ENCODE measurements at regions of chr9 and their contacts with region 1.

Region 1: GRCh38 chr9:122125158-122125508 is 32.0 kb upstream of the TTLL11 start:
- DNase-seq: peak; percentile 77
- H3K4me3 ChIP-seq: no peak overlapping the region
- H3K27ac ChIP-seq: no peak overlapping the region
- H3K4me1 ChIP-seq: peaks cover 20% of the 10 kb centered on the region
- H3K27me3 ChIP-seq: no peaks in the 10 kb centered on the region
- CTCF ChIP-seq: peak; percentile 85 to 95
- POLR2A ChIP-seq: no peak

Region 2: DNA sequence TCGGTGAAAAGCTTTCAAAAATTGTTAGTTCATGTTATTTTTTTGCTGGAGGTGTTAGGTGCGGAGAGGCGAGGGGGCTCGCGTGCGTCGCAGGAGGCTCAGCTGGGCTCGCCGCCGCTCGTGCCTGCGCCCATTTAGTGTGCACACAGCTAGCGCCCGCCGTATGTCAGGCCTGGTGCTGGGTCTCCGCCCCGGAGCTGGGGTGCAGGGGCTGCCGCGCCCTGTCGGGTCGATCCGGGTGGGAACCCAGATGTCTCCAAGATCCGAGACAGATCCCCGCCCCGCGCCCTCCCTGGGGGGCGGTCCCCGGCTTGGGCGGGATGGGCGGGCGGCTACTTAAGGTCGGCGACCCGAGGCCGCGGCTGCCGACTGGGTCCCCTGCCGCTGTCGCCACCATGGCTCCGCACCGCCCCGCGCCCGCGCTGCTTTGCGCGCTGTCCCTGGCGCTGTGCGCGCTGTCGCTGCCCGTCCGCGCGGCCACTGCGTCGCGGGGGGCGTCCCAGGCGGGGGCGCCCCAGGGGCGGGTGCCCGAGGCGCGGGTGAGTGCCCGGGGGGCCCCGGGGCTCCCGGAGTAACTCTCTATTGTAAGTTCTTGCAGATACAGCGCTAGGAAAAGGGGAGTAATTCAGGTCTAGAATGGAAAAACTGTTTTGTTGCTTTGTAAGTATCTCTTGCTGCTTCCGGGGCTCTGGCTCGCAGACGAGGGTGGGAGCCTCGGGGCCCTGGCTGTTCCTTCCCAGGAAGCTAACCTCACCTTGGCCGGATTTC is 825.5 kb before region 1 on chr9:
- CTCF ChIA-PET with region 1: no interaction called
- POLR2A ChIA-PET with region 1: no interaction called
- dilution Hi-C with region 1: no loop called
- intact Hi-C with region 1: no loop called
- DNase-seq: peak; percentile 41
- H3K4me3 ChIP-seq: peak overlapping the region; percentile 41 to 52 (median 44)
- H3K27ac ChIP-seq: no peak overlapping the region
- H3K4me1 ChIP-seq: peaks cover 15% of the 10 kb centered on the region
- H3K27me3 ChIP-seq: no peaks in the 10 kb centered on the region
- CTCF ChIP-seq: no peak
- POLR2A ChIP-seq: peak; percentile 31

Region 3: GRCh38 chr9:121992571-121993212 is 132.4 kb before region 1 on chr9:
- CTCF ChIA-PET with region 1: no interaction called
- POLR2A ChIA-PET with region 1: no interaction called
- dilution Hi-C with region 1: no loop called
- intact Hi-C with region 1: no loop called
- DNase-seq: peak; percentile 74
- H3K4me3 ChIP-seq: no peak overlapping the region
- H3K27ac ChIP-seq: no peak overlapping the region
- H3K4me1 ChIP-seq: peaks cover 5% of the 10 kb centered on the region
- H3K27me3 ChIP-seq: no peaks in the 10 kb centered on the region
- CTCF ChIP-seq: peak; percentile 58 to 68
- POLR2A ChIP-seq: no peak

Region 4: DNA sequence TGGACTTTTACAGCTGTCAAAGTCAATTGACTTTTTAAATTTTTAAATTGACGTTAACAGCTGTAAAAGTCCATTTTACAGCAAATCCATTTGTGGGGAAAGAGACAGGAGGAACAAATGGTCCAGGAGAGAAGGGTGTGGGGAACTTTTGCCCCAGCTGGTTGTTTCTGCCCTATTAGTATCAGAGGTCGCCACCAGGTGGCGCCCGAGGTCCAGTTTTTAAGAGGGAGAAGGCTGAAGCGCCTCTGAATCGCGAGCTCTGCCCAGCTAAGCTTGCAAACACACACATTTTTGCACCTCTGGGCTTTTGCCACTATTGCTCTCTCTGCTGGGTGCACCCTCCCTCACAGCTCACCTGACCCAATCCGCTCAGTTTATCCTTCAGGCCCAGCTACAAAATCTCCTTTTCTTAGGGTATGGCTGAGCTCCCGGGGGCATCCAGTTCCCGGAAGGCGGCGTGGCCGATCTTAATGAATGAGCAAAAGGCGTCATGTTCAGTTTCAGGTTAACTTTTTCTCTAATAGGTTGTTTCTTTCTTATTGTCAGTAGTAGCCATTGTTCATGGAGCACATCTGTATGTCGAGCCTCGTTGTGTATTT is 25.8 kb before region 1 on chr9:
- CTCF ChIA-PET with region 1: interaction called, 331 read pairs
- POLR2A ChIA-PET with region 1: no interaction called
- dilution Hi-C with region 1: no loop called
- intact Hi-C with region 1: loop called (anchors 1 kb)
- DNase-seq: peak; percentile 60
- H3K4me3 ChIP-seq: no peak overlapping the region
- H3K27ac ChIP-seq: no peak overlapping the region
- H3K4me1 ChIP-seq: no peaks in the 10 kb centered on the region
- H3K27me3 ChIP-seq: peaks cover 0 to 2% of the 10 kb centered on the region in 2 experiments
- CTCF ChIP-seq: peak; percentile 77 to 85
- POLR2A ChIP-seq: no peak

Region 5: GRCh38 chr9:122190609-122191381 is 65.7 kb after region 1 on chr9:
- CTCF ChIA-PET with region 1: interaction called, 10 read pairs
- POLR2A ChIA-PET with region 1: no interaction called
- dilution Hi-C with region 1: no loop called
- intact Hi-C with region 1: no loop called
- DNase-seq: no peak
- H3K4me3 ChIP-seq: no peak overlapping the region
- H3K27ac ChIP-seq: no peak overlapping the region
- H3K4me1 ChIP-seq: no peaks in the 10 kb centered on the region
- H3K27me3 ChIP-seq: no peaks in the 10 kb centered on the region
- CTCF ChIP-seq: no peak
- POLR2A ChIP-seq: no peak

Region 6: DNA sequence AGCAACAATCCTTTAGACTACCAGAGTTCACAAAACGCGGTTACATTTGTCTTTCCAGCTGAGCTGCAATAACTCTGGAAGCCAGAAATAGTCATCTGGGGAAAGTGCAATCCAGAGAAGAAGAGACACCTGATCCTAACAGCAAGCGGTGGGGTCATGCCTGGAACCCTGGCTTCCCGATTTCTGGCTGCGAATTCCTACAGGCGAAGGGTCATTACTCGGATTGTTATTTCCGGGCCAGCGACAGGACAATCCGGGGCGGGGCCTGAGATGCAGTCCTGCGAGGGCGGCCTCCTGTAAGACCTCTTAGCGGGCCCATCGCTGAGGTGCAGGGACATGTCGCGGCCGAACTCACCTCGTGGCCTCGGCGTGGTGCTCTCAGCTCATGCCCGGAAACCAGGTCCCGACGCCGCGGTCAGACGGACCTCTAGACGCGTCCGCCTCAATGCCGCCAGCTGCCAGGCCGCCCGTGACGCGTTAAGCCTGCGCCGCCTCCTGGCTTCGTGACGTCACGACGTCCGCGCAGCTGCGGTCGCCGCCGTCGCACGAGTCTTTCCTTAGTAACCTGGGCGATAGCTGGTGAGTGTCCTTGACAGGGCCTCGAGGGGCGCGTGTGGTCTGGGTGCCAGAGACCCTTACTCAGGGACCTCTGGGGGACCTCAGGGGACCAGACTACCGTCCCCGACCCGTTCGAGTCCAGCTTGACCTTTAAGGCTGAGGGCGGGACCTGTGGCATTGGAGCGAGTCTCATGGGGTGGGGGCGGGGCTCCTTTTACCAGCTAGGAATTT is 139.4 kb after region 1 on chr9 and contains the starts of genes MRRF and RBM18:
- CTCF ChIA-PET with region 1: interaction called, 15 read pairs
- POLR2A ChIA-PET with region 1: no interaction called
- dilution Hi-C with region 1: no loop called
- intact Hi-C with region 1: loop called (anchors 1 kb)
- DNase-seq: peak; percentile 95
- H3K4me3 ChIP-seq: peak within 1 kb of the TSS; percentile 53 to 88 (median 76)
- H3K27ac ChIP-seq: peak within 1 kb of the TSS; percentile 68
- H3K4me1 ChIP-seq: peaks cover 26% of the 10 kb centered on the region
- H3K27me3 ChIP-seq: no peaks in the 10 kb centered on the region
- CTCF ChIP-seq: no peak
- POLR2A ChIP-seq: peak; percentile 85
- total RNA-seq, gene MRRF: 36.4 and 36.5 TPM in 2 replicates
- total RNA-seq, gene RBM18: 26.9 and 28.6 TPM in 2 replicates

Region 7: DNA sequence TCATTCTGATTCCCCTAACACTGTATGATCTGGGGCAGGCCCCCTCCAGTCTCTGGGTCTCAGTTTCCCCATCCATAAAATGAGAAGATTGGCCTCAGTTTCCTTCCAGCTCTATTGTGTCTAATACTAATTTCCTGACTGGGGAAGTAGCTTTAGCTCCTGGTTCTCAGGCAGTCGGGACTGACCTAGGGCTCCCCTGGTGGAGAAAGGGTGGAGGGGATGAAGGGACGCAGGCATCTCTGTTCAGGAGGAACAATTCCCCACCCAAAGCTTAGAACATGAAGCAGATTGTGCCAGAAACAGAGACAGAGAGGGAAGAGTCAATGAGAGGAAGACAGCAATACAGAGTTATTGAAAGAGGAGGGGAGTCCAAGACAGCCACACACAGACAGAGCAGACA is 231.5 kb after region 1 on chr9:
- CTCF ChIA-PET with region 1: interaction called, 576 read pairs
- POLR2A ChIA-PET with region 1: no interaction called
- dilution Hi-C with region 1: loop called (anchors 25 kb)
- intact Hi-C with region 1: no loop called
- DNase-seq: no peak
- H3K4me3 ChIP-seq: no peak overlapping the region
- H3K27ac ChIP-seq: no peak overlapping the region
- H3K4me1 ChIP-seq: no peaks in the 10 kb centered on the region
- H3K27me3 ChIP-seq: no peaks in the 10 kb centered on the region
- CTCF ChIP-seq: peak; percentile 25 to 33
- POLR2A ChIP-seq: no peak